ENCODE measurements at regions of chr20 and their contacts with region 1.

Region 1: DNA sequence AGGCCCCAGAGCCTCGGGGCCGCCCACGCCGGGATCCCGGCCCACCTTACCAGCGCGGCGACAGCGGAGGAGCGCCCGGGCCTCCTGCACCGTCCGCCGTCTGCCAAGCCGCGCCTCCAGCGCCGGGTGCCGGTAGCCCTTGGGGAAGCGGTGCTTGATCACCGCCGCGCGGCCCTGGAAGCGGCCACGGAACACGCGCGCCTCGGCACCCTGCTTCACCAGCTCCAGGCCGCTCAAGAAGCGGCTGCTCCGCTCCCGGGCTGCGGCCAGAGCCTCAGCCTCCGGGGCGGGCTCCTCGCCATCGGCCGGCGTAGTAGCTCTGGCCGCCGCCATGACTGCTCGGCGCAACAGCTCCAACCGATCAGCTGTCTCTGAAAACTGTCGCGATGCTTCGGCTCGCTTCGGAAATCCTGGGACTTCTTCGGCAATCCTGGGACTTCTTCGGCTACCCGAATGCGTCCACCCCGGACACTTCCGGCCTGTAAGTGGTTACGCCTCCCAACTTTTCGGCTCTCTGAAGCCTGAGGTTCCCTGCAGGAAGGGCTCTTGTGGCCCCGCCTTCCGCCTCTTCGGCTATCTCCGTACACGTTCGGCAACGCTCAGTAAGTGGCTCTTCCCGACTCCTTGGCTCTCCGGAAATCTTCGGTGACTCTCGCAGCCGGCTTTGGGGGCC is at the start of gene TP53RK:
- DNase-seq: peak; percentile 98
- ATAC-seq: peak; percentile 99
- H3K4me3 Mint-ChIP-seq: peak within 1 kb of the TSS; percentile 85
- H3K27ac Mint-ChIP-seq: peak within 1 kb of the TSS; percentile 88
- H3K4me1 Mint-ChIP-seq: peaks cover 43% of the 10 kb centered on the region
- H3K27me3 Mint-ChIP-seq: no peaks in the 10 kb centered on the region
- total RNA-seq, gene TP53RK: 15.8 to 15.9 TPM

Region 2: GRCh38 chr20:46552460-46553420 is 136.5 kb before region 1 on chr20:
- CTCF ChIA-PET with region 1: interaction called, 15 read pairs
- POLR2A ChIA-PET with region 1: no interaction called
- DNase-seq: peak; percentile 85
- ATAC-seq: peak; percentile 91
- H3K4me3 Mint-ChIP-seq: peak overlapping the region; percentile 66
- H3K27ac Mint-ChIP-seq: peak overlapping the region; percentile 92
- H3K4me1 Mint-ChIP-seq: peaks cover 71% of the 10 kb centered on the region
- H3K27me3 Mint-ChIP-seq: peaks cover 3% of the 10 kb centered on the region

Region 3: GRCh38 chr20:46811224-46812084 is 122.2 kb after region 1 on chr20:
- CTCF ChIA-PET with region 1: no interaction called
- POLR2A ChIA-PET with region 1: no interaction called
- DNase-seq: no peak
- ATAC-seq: no peak
- H3K4me3 Mint-ChIP-seq: no peak overlapping the region
- H3K27ac Mint-ChIP-seq: no peak overlapping the region
- H3K4me1 Mint-ChIP-seq: no peaks in the 10 kb centered on the region
- H3K27me3 Mint-ChIP-seq: peaks cover 27% of the 10 kb centered on the region

Measured in activated CD8-positive, alpha-beta T cell treated with anti-CD3 and anti-CD28 coated beads, Interleukin-2, amount 10 ng/mL, durations not matched to agents 7 days and 5 days (primary cell).